ENCODE measurements at regions of chr5 and their contacts with region 1.

Region 1: DNA sequence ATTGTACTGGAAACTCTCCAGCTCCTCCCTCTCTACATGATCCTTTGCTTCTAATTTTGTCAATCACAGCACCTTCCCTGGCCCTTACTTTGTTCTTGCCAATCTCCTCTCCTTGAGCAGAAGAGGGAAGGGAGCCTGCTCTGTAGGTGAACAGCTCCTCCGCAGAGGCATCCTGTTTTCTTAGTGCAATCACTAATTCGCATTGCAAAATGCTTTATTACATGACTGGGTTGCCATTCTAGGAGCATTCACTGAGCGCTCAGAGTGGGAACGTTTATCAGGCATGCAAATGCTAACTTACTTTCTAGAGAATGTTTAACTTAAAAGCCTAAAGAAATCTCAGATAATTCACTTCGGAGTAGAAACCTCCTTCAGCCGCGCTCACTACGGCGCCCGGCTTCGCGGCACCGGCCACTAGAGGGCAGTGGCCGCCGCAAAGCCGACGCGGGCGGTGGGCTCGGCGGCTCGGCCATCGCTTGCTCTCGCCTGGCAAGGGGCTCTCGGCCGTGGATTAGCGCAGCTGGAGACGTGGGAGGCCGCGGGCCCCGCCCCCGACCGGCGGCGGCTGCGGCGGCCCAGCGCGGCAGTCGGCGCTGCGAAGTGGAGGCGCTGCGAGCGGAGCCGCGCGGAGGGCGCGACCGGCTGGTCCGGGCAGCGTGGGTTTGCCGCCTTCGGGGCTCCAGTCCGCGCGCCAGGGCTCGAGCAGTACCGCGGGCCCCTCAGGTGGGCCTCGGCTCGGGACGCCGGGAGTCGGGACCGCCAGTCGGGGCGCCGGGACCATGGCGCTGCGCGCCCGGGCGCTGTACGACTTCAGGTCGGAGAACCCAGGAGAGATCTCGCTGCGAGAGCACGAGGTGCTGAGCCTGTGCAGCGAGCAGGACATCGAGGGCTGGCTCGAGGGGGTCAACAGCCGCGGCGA is at the start of gene SNX18:
- DNase-seq: peak; percentile 94
- ATAC-seq: peak; percentile 85
- H3K4me3 ChIP-seq: peak within 1 kb of the TSS; percentile 69 to 97 (median 92)
- H3K4me3 Mint-ChIP-seq: peak within 1 kb of the TSS; percentile 92
- H3K27ac ChIP-seq: peak within 1 kb of the TSS; percentile 9 to 70
- H3K27ac Mint-ChIP-seq: peak within 1 kb of the TSS; percentile 84
- H3K4me1 ChIP-seq: peaks cover 30 to 47% of the 10 kb centered on the region in 2 donors
- H3K4me1 Mint-ChIP-seq: peaks cover 45% of the 10 kb centered on the region
- H3K27me3 ChIP-seq: no peaks in the 10 kb centered on the region
- H3K27me3 Mint-ChIP-seq: no peaks in the 10 kb centered on the region
- CTCF ChIP-seq: peak; percentile 90
- total RNA-seq, gene SNX18: 31.6 and 34.2 TPM in 2 replicates

Region 2: GRCh38 chr5:54590824-54591223 is 73.4 kb after region 1 on chr5:
- CTCF ChIA-PET with region 1: interaction called, 6 read pairs
- POLR2A ChIA-PET with region 1: no interaction called
- intact Hi-C with region 1: loop called (anchors 10 kb)
- DNase-seq: peak; percentile 22
- ATAC-seq: no peak
- H3K4me3 ChIP-seq: peak overlapping the region in 1 of 5 experiments; percentile 15
- H3K4me3 Mint-ChIP-seq: no peak overlapping the region
- H3K27ac ChIP-seq: no peak overlapping the region
- H3K27ac Mint-ChIP-seq: no peak overlapping the region
- H3K4me1 ChIP-seq: peaks cover 8 to 9% of the 10 kb centered on the region in 2 donors
- H3K4me1 Mint-ChIP-seq: peaks cover 11% of the 10 kb centered on the region
- H3K27me3 ChIP-seq: no peaks in the 10 kb centered on the region
- H3K27me3 Mint-ChIP-seq: peaks cover 1% of the 10 kb centered on the region
- CTCF ChIP-seq: no peak

Region 3: DNA sequence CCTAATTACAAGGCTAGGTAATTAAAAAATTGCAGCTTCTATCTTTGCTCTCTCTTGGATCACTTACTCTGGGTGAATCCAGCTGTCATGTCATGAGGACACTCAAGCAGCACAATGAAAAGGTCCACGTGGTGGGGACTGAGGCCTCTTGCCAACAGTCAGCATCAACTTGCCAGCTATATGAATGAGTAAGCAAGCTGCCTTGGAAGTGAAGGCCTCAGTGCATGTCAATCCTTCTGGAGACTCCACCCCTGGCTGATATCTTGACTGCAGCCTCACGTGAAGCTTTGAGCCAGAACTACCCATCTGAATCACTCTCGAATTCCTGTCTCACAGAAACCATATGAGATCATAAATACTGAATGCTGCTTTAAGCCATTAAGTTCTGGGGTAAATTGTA is 140.6 kb after region 1 on chr5:
- CTCF ChIA-PET with region 1: no interaction called
- POLR2A ChIA-PET with region 1: no interaction called
- intact Hi-C with region 1: no loop called
- DNase-seq: no peak
- ATAC-seq: no peak
- H3K4me3 ChIP-seq: no peak overlapping the region
- H3K4me3 Mint-ChIP-seq: no peak overlapping the region
- H3K27ac ChIP-seq: no peak overlapping the region
- H3K27ac Mint-ChIP-seq: no peak overlapping the region
- H3K4me1 ChIP-seq: peaks cover 0 to 6% of the 10 kb centered on the region in 2 donors
- H3K4me1 Mint-ChIP-seq: peaks cover 17% of the 10 kb centered on the region
- H3K27me3 ChIP-seq: no peaks in the 10 kb centered on the region
- H3K27me3 Mint-ChIP-seq: no peaks in the 10 kb centered on the region
- CTCF ChIP-seq: no peak

Region 4: DNA sequence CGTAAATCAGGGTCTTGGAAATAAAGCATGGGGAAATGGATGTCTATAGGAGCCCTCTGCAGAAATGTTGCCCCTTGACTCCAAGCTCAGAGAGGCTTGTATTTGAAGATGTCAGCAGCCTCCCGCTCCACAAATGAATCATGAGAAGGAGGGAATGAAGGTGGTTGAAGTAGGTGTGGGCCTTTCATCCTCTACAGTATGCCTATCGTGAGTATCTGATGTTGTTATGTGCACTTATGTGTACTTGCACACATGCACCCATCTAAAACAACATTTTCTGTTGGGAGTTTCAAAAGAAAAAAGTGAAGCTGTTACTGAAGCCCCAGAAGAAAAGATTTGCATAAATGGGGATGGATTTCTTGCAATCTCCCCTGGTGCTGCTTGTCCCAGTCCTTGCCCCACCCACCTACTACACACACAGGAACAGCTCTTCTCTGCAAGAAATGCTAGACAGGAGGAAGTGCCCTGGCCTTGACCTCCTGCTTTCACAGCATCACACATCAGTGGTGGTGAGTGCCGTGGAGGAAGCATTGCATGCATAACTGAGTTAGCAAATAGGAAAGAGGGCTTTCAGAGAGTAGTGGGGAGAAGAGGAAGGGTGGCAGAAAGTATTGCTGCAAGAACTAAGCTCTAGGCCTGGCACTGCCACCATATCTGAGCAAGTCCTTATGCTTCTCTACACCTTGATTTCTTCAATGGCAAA is 156.2 kb after region 1 on chr5:
- CTCF ChIA-PET with region 1: interaction called, 15 read pairs
- POLR2A ChIA-PET with region 1: no interaction called
- intact Hi-C with region 1: loop called (anchors 5 kb)
- DNase-seq: peak; percentile 74
- ATAC-seq: peak; percentile 91
- H3K4me3 ChIP-seq: no peak overlapping the region
- H3K4me3 Mint-ChIP-seq: peak overlapping the region; percentile 43
- H3K27ac ChIP-seq: peak overlapping the region; percentile 26 to 62
- H3K27ac Mint-ChIP-seq: peak overlapping the region; percentile 47
- H3K4me1 ChIP-seq: peaks cover 68 to 76% of the 10 kb centered on the region in 2 donors
- H3K4me1 Mint-ChIP-seq: peaks cover 75% of the 10 kb centered on the region
- H3K27me3 ChIP-seq: no peaks in the 10 kb centered on the region
- H3K27me3 Mint-ChIP-seq: no peaks in the 10 kb centered on the region
- CTCF ChIP-seq: no peak

Region 5: DNA sequence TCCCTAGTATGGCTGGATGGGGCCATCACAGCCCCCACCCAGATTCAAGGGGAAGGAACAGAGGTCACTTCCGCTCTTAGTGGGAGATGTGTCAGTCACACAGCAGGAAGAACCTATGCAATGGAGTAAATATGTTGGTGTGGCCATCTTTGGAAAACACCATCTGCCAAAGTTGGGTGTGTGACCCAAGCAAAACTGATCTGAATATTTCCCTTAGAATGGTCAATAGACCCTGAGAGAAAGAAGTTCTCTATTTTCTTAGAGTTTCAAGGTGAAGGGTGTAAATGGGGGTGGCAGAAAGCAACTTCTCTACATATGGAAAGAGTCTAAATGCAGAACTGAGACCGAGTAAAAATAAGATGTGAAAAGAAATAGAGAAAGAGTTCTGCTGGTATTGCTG is 255.3 kb after region 1 on chr5:
- CTCF ChIA-PET with region 1: interaction called, 11 read pairs
- POLR2A ChIA-PET with region 1: no interaction called
- intact Hi-C with region 1: no loop called
- DNase-seq: peak; percentile 69
- ATAC-seq: peak; percentile 75
- H3K4me3 ChIP-seq: no peak overlapping the region
- H3K4me3 Mint-ChIP-seq: peak overlapping the region; percentile 62
- H3K27ac ChIP-seq: peak overlapping the region; percentile 69 to 84
- H3K27ac Mint-ChIP-seq: peak overlapping the region; percentile 90
- H3K4me1 ChIP-seq: peaks cover 40 to 49% of the 10 kb centered on the region in 2 donors
- H3K4me1 Mint-ChIP-seq: peaks cover 75% of the 10 kb centered on the region
- H3K27me3 ChIP-seq: no peaks in the 10 kb centered on the region
- H3K27me3 Mint-ChIP-seq: peaks cover 2% of the 10 kb centered on the region
- CTCF ChIP-seq: no peak

Region 6: DNA sequence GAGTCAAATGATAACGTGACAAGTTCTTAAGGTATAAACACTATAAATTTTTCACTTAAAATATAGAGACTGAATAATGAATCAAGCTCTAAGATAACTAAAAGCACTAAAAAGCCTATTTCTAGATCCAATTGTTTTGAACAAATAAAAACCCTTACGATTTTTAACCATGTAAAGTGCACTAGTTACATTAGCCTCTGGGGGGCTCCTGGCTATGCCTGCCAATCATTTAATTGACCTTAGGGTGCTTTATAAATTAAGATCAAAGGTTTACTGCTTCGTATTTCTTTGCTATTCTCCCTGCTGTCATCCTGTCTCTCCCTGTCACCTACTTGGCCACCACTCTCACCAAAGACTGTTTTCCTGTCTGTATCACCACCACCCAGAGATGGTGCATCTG is 334.6 kb after region 1 on chr5:
- CTCF ChIA-PET with region 1: interaction called, 27 read pairs
- POLR2A ChIA-PET with region 1: no interaction called
- intact Hi-C with region 1: no loop called
- DNase-seq: no peak
- ATAC-seq: no peak
- H3K4me3 ChIP-seq: no peak overlapping the region
- H3K4me3 Mint-ChIP-seq: no peak overlapping the region
- H3K27ac ChIP-seq: no peak overlapping the region
- H3K27ac Mint-ChIP-seq: no peak overlapping the region
- H3K4me1 ChIP-seq: no peaks in the 10 kb centered on the region
- H3K4me1 Mint-ChIP-seq: no peaks in the 10 kb centered on the region
- H3K27me3 ChIP-seq: peaks cover 0 to 8% (median 7%) of the 10 kb centered on the region in 4 experiments
- H3K27me3 Mint-ChIP-seq: peaks cover 37% of the 10 kb centered on the region
- CTCF ChIP-seq: no peak

Region 7: DNA sequence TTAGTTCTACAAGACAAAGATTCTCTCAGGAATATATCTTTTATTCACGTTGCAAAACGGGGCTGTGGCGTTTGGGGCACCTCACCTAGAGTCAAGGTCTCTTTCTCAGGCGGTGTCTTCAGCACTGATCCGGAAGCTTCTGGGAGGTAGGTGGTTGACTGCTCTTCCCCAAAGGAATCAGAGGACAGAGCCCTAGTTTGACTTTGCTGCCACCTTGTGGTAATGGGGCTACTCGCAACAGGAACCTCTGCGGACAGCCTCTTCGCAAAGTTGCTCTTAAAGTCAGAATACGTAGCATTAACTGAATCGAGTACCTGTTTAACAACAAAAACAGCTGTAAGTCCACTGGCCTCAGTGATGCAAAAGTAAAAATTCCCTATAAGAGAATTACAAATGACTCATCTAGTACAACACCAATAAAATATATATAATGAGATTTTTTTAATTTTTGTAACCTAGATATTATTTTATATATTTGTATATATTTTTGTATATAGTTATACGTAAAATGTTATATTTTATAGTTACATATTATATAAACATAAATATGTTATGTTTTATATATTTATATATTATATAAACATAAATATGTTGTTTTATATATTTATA is 629.2 kb after region 1 on chr5:
- CTCF ChIA-PET with region 1: interaction called, 11 read pairs
- POLR2A ChIA-PET with region 1: no interaction called
- intact Hi-C with region 1: no loop called
- DNase-seq: peak; percentile 74
- ATAC-seq: peak; percentile 82
- H3K4me3 ChIP-seq: no peak overlapping the region
- H3K4me3 Mint-ChIP-seq: no peak overlapping the region
- H3K27ac ChIP-seq: no peak overlapping the region
- H3K27ac Mint-ChIP-seq: no peak overlapping the region
- H3K4me1 ChIP-seq: peaks cover 4% of the 10 kb centered on the region in 2 donors
- H3K4me1 Mint-ChIP-seq: peaks cover 2% of the 10 kb centered on the region
- H3K27me3 ChIP-seq: peaks cover 0 to 2% (median 0%) of the 10 kb centered on the region in 4 experiments
- H3K27me3 Mint-ChIP-seq: peaks cover 16% of the 10 kb centered on the region
- CTCF ChIP-seq: peak; percentile 97

Measured in B cell (primary cell).